Naive thymus-derived CD8-positive, alpha-beta T cell (primary cell): ENCODE measurements at regions of chr5 and their contacts with region 1.

Region 1: GRCh38 chr5:157253547-157253946 is 12.4 kb upstream of the CYFIP2 start:
- DNase-seq: peak in 1 of 10 donors; percentile 15
- ATAC-seq: no peak
- H3K4me3 Mint-ChIP-seq: peak overlapping the region; percentile 40 to 83 (median 72)
- H3K27ac Mint-ChIP-seq: peak overlapping the region; percentile 89 to 97 (median 92)
- H3K4me1 Mint-ChIP-seq: peaks cover 43 to 97% (median 94%) of the 10 kb centered on the region in 4 donors
- H3K27me3 Mint-ChIP-seq: no peaks in the 10 kb centered on the region

Region 2: GRCh38 chr5:157219491-157220271 is 33.9 kb before region 1 on chr5:
- POLR2A ChIA-PET with region 1: interaction called, 16 read pairs
- DNase-seq: no peak
- ATAC-seq: no peak
- H3K4me3 Mint-ChIP-seq: peak overlapping the region in 9 of 10 donors; percentile 27 to 77 (median 46)
- H3K27ac Mint-ChIP-seq: peak overlapping the region; percentile 81 to 98 (median 90)
- H3K4me1 Mint-ChIP-seq: peaks cover 53 to 88% (median 84%) of the 10 kb centered on the region in 4 donors
- H3K27me3 Mint-ChIP-seq: no peaks in the 10 kb centered on the region

Region 3: GRCh38 chr5:157265714-157266285 is 12.3 kb after region 1 on chr5 and contains the start of gene CYFIP2:
- POLR2A ChIA-PET with region 1: interaction called, 46 read pairs
- DNase-seq: peak; percentile 79 to 91 (median 86)
- ATAC-seq: peak; percentile 81 to 85
- H3K4me3 Mint-ChIP-seq: peak within 1 kb of the TSS; percentile 93 to 98 (median 96)
- H3K27ac Mint-ChIP-seq: peak within 1 kb of the TSS; percentile 97 to 99 (median 98)
- H3K4me1 Mint-ChIP-seq: peaks cover 47 to 77% (median 74%) of the 10 kb centered on the region in 4 donors
- H3K27me3 Mint-ChIP-seq: no peaks in the 10 kb centered on the region
- polyA plus RNA-seq, gene CYFIP2: 417 to 668 (median 506) TPM

Region 4: DNA sequence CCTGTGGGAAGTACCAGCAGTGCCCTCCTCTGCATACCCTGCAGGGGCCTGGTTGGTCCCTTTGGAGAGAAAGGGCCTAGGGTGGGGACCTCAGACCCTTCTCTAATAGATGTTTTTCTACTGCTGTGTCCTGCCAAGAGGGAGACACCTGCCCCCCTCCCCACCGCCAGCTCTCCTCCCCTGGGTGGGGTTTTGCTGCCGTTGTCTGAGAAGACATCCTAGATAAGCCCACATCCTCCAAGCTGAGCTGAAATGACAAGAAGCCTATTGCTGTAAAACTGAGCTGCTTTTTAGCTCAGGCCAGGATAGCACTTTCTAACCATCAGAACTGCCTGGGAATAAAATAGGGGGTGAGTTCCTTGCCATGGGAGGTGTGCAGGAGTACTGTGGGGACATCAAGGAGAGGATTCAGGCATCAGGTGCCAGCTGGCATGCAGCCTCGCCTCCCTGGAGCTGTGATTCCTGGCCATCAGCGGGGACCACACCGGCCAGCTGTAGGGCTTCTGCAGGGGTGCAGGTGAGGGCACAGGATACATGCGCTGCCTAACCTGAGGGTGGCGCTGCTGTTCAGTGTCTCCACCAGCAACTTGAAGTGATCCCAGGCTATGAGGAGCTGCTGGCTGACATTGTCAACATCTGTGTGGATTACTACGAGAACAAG is 50.2 kb after region 1 on chr5:
- POLR2A ChIA-PET with region 1: interaction called, 26 read pairs
- DNase-seq: peak; percentile 42 to 80 (median 63)
- ATAC-seq: peak; percentile 66 to 81
- H3K4me3 Mint-ChIP-seq: peak overlapping the region; percentile 67 to 90 (median 83)
- H3K27ac Mint-ChIP-seq: peak overlapping the region; percentile 86 to 98 (median 94)
- H3K4me1 Mint-ChIP-seq: peaks cover 37 to 84% (median 69%) of the 10 kb centered on the region in 4 donors
- H3K27me3 Mint-ChIP-seq: no peaks in the 10 kb centered on the region

Region 5: DNA sequence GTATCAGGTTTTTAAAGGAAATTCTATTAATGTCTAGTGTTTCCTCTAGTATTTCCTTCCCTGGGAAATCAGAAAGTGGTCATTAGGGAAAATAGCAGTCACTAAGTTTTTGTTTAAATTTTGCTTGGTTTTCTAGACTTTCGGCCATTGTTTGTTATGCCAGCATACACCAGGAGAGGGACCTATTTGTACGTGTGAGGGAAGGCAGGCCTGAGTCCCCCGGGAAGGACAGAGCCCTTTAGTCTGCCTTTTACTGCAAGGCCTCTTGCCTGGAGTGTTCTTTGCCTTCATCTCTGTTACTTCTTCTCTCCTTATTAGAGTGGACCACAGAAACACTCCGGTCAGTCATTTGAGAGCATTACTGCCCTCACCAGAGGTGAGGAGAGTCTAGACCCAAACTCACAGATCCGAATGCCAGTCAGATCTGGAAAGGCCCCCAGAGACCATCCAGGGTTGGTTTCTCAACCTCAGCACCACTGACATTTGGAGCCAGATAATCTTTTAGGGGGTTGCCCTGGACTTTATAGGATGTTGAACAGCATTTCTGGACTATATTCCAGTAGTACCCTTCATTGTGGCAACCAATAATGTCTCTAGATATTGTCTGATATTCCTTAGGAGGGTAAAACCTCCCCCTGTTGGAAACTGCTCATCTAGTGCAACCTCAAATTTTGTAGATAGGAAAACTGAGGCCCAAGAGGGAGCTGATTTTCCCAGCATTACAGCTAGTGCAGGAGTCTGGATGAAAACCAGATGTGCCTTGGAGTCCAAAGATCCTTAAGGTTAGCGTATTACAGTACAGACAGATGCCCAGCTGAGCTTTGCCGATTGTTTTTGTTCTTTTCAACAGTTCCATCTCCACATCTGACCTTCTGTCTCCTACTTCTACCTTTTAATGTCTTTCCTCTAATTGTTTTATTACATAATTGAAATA is 113.5 kb after region 1 on chr5:
- POLR2A ChIA-PET with region 1: no interaction called
- DNase-seq: no peak
- ATAC-seq: no peak
- H3K4me3 Mint-ChIP-seq: no peak overlapping the region
- H3K27ac Mint-ChIP-seq: peak overlapping the region in 9 of 10 donors; percentile 26 to 83 (median 74)
- H3K4me1 Mint-ChIP-seq: peaks cover 0 to 15% (median 10%) of the 10 kb centered on the region in 4 donors
- H3K27me3 Mint-ChIP-seq: no peaks in the 10 kb centered on the region